PC-9 (cell line): ENCODE measurements at regions of chr20 and their contacts with region 1.

Region 1: GRCh38 chr20:38143646-38144554 is 21.2 kb downstream of the TGM2 start:
- DNase-seq: peak; percentile 89 to 99
- H3K4me3 ChIP-seq: no peak overlapping the region; the same call in 1 of the 2 replicates
- H3K27ac ChIP-seq: peak overlapping the region; percentile 97
- H3K4me1 ChIP-seq: peaks cover 56% of the 10 kb centered on the region
- H3K27me3 ChIP-seq: no peaks in the 10 kb centered on the region
- CTCF ChIP-seq: no peak

Region 2: DNA sequence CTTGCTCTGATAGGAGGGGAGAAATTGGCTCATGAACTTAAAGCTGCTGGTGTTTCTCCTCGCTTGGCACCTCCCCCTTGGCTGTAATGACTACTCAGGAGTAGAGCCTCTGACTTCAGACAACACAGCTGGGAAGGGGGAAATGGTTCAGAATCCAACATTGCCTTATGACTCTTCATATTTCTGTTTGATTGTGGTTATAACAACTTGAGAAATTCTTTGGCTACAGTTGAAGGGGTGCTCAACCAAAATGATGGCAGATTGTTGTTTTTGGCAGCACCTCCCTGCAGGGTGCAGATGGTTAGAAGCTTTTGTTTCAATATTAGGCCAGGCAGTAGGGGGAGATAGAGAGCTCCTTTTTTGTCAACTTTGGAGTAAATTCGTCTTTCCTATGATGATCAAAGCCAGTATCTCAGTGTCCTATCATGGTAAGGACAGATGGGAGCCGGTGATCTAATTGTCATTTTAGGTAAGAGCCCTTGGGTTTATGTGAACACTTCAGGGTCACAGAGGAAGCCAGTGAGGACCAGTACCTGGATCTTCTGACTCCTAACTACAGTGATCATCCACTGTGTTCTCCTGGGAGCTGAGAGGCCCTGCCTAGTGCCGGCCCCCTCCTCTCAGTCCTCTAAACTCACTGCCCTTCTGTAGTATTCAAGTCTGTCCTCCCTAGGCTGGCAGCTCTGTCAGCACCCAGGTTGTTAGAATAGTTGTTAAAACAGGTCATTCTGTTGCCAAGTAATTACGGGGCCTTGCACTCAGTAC is 70.4 kb before region 1 on chr20:
- CTCF ChIA-PET with region 1: interaction called, 5 read pairs
- POLR2A ChIA-PET with region 1: no interaction called
- intact Hi-C with region 1: loop called (anchors 1 kb)
- DNase-seq: peak; percentile 63 to 80
- H3K4me3 ChIP-seq: no peak overlapping the region
- H3K27ac ChIP-seq: peak overlapping the region; percentile 53
- H3K4me1 ChIP-seq: peaks cover 26% of the 10 kb centered on the region
- H3K27me3 ChIP-seq: no peaks in the 10 kb centered on the region
- CTCF ChIP-seq: peak; percentile 85

Region 3: GRCh38 chr20:38109591-38110524 is 34.0 kb before region 1 on chr20:
- CTCF ChIA-PET with region 1: interaction called, 4 read pairs
- POLR2A ChIA-PET with region 1: interaction called, 9 read pairs
- intact Hi-C with region 1: loop called (anchors 1 kb)
- DNase-seq: peak; percentile 87 to 99
- H3K4me3 ChIP-seq: no peak overlapping the region; the same call in 1 of the 2 replicates
- H3K27ac ChIP-seq: peak overlapping the region; percentile 92
- H3K4me1 ChIP-seq: peaks cover 58% of the 10 kb centered on the region
- H3K27me3 ChIP-seq: no peaks in the 10 kb centered on the region
- CTCF ChIP-seq: no peak

Region 4: GRCh38 chr20:38117230-38118024 is 26.5 kb before region 1 on chr20:
- CTCF ChIA-PET with region 1: interaction called, 4 read pairs
- POLR2A ChIA-PET with region 1: interaction called, 8 read pairs
- intact Hi-C with region 1: loop called (anchors 1 kb)
- DNase-seq: peak; percentile 57 to 98
- H3K4me3 ChIP-seq: no peak overlapping the region
- H3K27ac ChIP-seq: peak overlapping the region; percentile 83
- H3K4me1 ChIP-seq: peaks cover 48% of the 10 kb centered on the region
- H3K27me3 ChIP-seq: no peaks in the 10 kb centered on the region
- CTCF ChIP-seq: no peak

Region 5: GRCh38 chr20:38127011-38127621 is 16.8 kb before region 1 on chr20:
- CTCF ChIA-PET with region 1: no interaction called
- POLR2A ChIA-PET with region 1: interaction called, 5 read pairs
- intact Hi-C with region 1: loop called (anchors 2 kb)
- DNase-seq: peak; percentile 69 to 89
- H3K4me3 ChIP-seq: no peak overlapping the region
- H3K27ac ChIP-seq: peak overlapping the region; percentile 97
- H3K4me1 ChIP-seq: peaks cover 78% of the 10 kb centered on the region
- H3K27me3 ChIP-seq: no peaks in the 10 kb centered on the region
- CTCF ChIP-seq: no peak

Region 6: GRCh38 chr20:38187512-38187911 is 43.6 kb after region 1 on chr20:
- CTCF ChIA-PET with region 1: no interaction called
- POLR2A ChIA-PET with region 1: interaction called, 4 read pairs
- intact Hi-C with region 1: loop called (anchors 1 kb)
- DNase-seq: no peak
- H3K4me3 ChIP-seq: no peak overlapping the region
- H3K27ac ChIP-seq: peak overlapping the region; percentile 86
- H3K4me1 ChIP-seq: peaks cover 64% of the 10 kb centered on the region
- H3K27me3 ChIP-seq: no peaks in the 10 kb centered on the region
- CTCF ChIP-seq: no peak

Region 7: GRCh38 chr20:38212806-38213606 is 69.1 kb after region 1 on chr20:
- CTCF ChIA-PET with region 1: interaction called, 10 read pairs
- POLR2A ChIA-PET with region 1: no interaction called
- intact Hi-C with region 1: loop called (anchors 2 kb)
- DNase-seq: no peak
- H3K4me3 ChIP-seq: no peak overlapping the region
- H3K27ac ChIP-seq: no peak overlapping the region
- H3K4me1 ChIP-seq: peaks cover 22% of the 10 kb centered on the region
- H3K27me3 ChIP-seq: no peaks in the 10 kb centered on the region
- CTCF ChIP-seq: no peak